Activated B cell treated with CpG ODN at 0.5 μM for 24 hours (primary cell): ENCODE measurements at regions of chr18 and their contacts with region 1.

Region 1: GRCh38 chr18:63320046-63320689 is 599 bp upstream of the BCL2 start:
- DNase-seq: peak; percentile 78
- ATAC-seq: peak; percentile 77
- H3K4me3 Mint-ChIP-seq: peak overlapping the region; percentile 87
- H3K27ac Mint-ChIP-seq: peak overlapping the region; percentile 85
- H3K4me1 Mint-ChIP-seq: peaks cover 49% of the 10 kb centered on the region
- H3K27me3 Mint-ChIP-seq: no peaks in the 10 kb centered on the region
- CTCF ChIP-seq: no peak

Region 2: GRCh38 chr18:62522504-62523254 is 797.5 kb before region 1 on chr18 and contains the start of gene ZCCHC2:
- CTCF ChIA-PET with region 1: no interaction called
- POLR2A ChIA-PET with region 1: no interaction called
- intact Hi-C with region 1: loop called (anchors 5 kb)
- DNase-seq: peak; percentile 100
- ATAC-seq: peak; percentile 75
- H3K4me3 Mint-ChIP-seq: peak within 1 kb of the TSS; percentile 95
- H3K27ac Mint-ChIP-seq: peak within 1 kb of the TSS; percentile 84
- H3K4me1 Mint-ChIP-seq: peaks cover 31% of the 10 kb centered on the region
- H3K27me3 Mint-ChIP-seq: no peaks in the 10 kb centered on the region
- CTCF ChIP-seq: no peak
- total RNA-seq, gene ZCCHC2: 28.6 and 29.4 TPM in 2 replicates

Region 3: DNA sequence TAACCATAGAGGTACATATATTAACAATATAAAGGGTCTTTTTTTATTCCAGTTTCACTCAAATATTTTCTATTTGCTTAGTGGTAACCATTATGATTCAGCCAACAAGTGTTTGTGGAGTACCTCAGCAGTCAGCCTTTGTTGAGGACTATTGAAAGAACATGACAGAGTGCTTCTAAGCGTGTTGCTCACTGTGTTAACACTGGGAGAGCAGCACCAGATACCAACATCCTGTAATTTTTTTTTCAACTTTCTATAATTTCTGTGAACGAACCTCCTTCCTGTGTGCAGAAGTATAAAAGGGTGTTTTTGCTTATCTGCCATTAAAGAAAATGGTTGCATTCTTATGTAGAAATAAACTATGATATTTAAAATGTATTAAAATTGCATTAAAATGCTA is 365.8 kb before region 1 on chr18:
- CTCF ChIA-PET with region 1: no interaction called
- POLR2A ChIA-PET with region 1: no interaction called
- intact Hi-C with region 1: no loop called
- DNase-seq: no peak
- ATAC-seq: no peak
- H3K4me3 Mint-ChIP-seq: no peak overlapping the region
- H3K27ac Mint-ChIP-seq: no peak overlapping the region
- H3K4me1 Mint-ChIP-seq: no peaks in the 10 kb centered on the region
- H3K27me3 Mint-ChIP-seq: no peaks in the 10 kb centered on the region
- CTCF ChIP-seq: no peak

Region 4: GRCh38 chr18:63119647-63120046 is 200.5 kb before region 1 on chr18:
- CTCF ChIA-PET with region 1: interaction called, 26 read pairs
- POLR2A ChIA-PET with region 1: interaction called, 7 read pairs
- intact Hi-C with region 1: loop called (anchors 1 kb)
- DNase-seq: no peak
- ATAC-seq: no peak
- H3K4me3 Mint-ChIP-seq: no peak overlapping the region
- H3K27ac Mint-ChIP-seq: no peak overlapping the region
- H3K4me1 Mint-ChIP-seq: peaks cover 5% of the 10 kb centered on the region
- H3K27me3 Mint-ChIP-seq: peaks cover 2% of the 10 kb centered on the region
- CTCF ChIP-seq: no peak

Region 5: DNA sequence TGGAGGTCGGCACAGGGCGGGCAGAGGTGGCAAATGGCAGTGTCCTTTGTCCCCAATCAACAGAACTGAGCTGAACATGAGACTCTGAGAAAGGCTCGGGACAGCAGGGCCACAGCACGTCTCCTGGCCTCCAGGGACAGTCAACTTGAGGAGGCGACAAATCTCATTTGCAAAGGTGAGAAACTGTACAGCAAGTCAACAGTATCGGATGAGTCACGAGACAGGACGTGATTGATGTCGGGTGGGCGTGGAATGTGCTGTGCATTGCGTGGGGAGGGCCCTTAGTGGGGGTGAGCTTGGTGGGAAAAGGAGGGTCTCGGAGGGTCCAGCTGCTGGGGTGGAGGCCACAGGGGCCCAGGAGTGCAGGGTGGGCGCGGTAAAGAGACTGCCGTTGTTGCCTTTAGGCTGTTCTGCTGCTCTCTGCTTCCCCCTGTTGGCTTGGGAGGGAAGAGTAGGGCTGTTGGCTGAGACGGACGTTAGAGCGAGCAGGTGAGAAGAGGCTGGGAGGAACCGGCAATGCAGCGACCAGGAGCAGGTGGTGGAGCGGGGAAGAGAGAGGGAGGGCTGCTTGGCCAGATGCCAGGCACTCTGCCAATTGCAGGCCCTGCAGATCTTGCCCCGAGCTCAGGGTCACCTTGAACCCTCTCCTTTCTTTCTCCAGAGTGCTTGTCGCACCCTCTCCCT is 164.9 kb before region 1 on chr18:
- CTCF ChIA-PET with region 1: interaction called, 38 read pairs
- POLR2A ChIA-PET with region 1: interaction called, 162 read pairs
- intact Hi-C with region 1: loop called (anchors 1 kb)
- DNase-seq: peak; percentile 73
- ATAC-seq: peak; percentile 63
- H3K4me3 Mint-ChIP-seq: peak overlapping the region; percentile 84
- H3K27ac Mint-ChIP-seq: peak overlapping the region; percentile 99
- H3K4me1 Mint-ChIP-seq: peaks cover 99% of the 10 kb centered on the region
- H3K27me3 Mint-ChIP-seq: no peaks in the 10 kb centered on the region
- CTCF ChIP-seq: peak; percentile 76

Region 6: GRCh38 chr18:63284827-63285733 is 35.1 kb before region 1 on chr18:
- CTCF ChIA-PET with region 1: interaction called, 29 read pairs
- POLR2A ChIA-PET with region 1: interaction called, 16 read pairs
- intact Hi-C with region 1: loop called (anchors 5 kb)
- DNase-seq: peak; percentile 28
- ATAC-seq: peak; percentile 86
- H3K4me3 Mint-ChIP-seq: peak overlapping the region; percentile 81
- H3K27ac Mint-ChIP-seq: no peak overlapping the region
- H3K4me1 Mint-ChIP-seq: peaks cover 21% of the 10 kb centered on the region
- H3K27me3 Mint-ChIP-seq: no peaks in the 10 kb centered on the region
- CTCF ChIP-seq: no peak

Region 7: DNA sequence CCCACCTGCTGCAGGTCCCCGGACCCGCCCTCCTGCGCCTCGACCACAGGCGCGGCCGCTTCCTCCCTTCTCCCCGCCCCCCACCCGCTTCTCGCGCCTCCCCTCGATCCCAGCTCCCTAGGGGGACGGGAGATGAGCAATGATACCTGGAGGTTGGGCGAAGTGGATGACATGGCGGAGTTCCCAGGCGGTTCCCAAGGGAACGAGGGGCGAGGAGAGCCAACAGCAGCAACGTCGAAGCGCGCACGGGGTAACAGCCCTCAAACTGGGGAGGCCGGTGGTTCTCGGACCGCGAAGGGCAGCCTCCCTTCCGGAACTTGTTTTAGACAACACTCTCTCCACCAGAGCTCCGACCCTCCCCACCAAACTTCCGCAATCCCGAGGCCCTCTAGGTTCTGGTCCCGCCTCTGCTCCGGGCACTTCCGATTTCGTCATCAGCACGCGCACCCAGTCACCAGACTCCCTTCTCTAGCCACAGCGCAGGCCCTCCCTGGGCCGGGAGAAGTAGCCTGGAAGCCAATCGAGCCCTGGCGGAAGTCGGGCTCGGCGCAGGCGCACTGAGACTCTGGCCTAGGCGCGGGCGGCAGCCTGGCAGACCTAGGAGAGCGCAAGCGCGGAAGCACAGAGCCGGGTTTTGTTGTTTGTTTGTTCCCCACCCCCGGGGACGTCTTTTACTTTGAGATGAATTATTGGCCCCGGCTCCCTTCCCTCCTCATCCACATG is 102.1 kb after region 1 on chr18 and contains the start of gene VPS4B:
- CTCF ChIA-PET with region 1: no interaction called
- POLR2A ChIA-PET with region 1: interaction called, 6 read pairs
- intact Hi-C with region 1: loop called (anchors 1 kb)
- DNase-seq: peak; percentile 100
- ATAC-seq: peak; percentile 96
- H3K4me3 Mint-ChIP-seq: peak within 1 kb of the TSS; percentile 99
- H3K27ac Mint-ChIP-seq: peak within 1 kb of the TSS; percentile 98
- H3K4me1 Mint-ChIP-seq: peaks cover 37% of the 10 kb centered on the region
- H3K27me3 Mint-ChIP-seq: peaks cover 2% of the 10 kb centered on the region
- CTCF ChIP-seq: no peak
- total RNA-seq, gene VPS4B: 66.2 and 66.8 TPM in 2 replicates